ENCODE measurements at regions of chr6 and their contacts with region 1.

Region 1: DNA sequence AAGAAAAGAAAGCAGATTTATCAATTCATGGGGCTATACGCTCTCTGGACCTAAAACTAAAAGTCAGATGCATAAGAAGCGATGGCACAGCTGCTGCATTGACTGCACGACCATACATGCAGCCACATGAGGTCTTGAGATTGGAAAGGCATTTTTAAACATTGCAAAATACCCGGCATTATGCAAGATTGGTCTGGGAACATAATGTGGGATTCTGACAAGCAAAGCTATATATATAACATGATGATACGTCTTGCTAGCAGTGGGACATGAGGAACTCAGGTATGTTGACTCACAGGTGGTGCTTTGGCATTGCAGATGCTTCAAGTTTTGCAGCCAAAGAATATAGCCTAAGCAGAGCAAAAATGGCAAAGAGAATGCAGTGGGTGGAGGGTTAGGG is 55.1 kb downstream of the SAMD3 start:
- DNase-seq: no peak
- H3K4me3 ChIP-seq: no peak overlapping the region
- H3K27ac ChIP-seq: no peak overlapping the region
- H3K4me1 ChIP-seq: no peaks in the 10 kb centered on the region
- H3K27me3 ChIP-seq: no peaks in the 10 kb centered on the region
- CTCF ChIP-seq: no peak

Region 2: DNA sequence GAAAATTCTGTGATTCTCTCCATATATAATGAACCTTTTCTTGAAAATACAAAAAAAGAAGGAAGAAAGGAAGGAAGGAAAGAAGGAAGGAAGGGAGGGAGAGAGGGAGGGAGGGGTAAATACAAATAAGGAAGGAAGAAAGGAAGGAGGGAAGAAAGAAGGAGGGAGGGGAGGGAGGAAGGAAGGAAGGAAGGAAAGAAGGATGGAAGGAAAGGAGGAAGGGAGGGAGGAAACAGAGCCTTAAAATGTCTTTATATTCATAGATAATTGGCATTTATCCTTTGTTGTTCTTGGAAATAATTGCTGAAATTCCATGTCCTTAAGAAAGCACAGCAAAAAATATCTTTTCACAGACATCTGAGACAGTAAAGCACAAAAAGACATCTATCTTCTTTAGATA is 14.8 kb after region 1 on chr6:
- CTCF ChIA-PET with region 1: interaction called, 5 read pairs
- POLR2A ChIA-PET with region 1: interaction called, 11 read pairs
- intact Hi-C with region 1: no loop called
- DNase-seq: no peak
- H3K4me3 ChIP-seq: no peak overlapping the region
- H3K27ac ChIP-seq: no peak overlapping the region
- H3K4me1 ChIP-seq: peaks cover 5% of the 10 kb centered on the region
- H3K27me3 ChIP-seq: no peaks in the 10 kb centered on the region
- CTCF ChIP-seq: no peak